Spleen (tissue), 13 donors: ENCODE measurements at regions of chr12 and their contacts with region 1.

Region 1: DNA sequence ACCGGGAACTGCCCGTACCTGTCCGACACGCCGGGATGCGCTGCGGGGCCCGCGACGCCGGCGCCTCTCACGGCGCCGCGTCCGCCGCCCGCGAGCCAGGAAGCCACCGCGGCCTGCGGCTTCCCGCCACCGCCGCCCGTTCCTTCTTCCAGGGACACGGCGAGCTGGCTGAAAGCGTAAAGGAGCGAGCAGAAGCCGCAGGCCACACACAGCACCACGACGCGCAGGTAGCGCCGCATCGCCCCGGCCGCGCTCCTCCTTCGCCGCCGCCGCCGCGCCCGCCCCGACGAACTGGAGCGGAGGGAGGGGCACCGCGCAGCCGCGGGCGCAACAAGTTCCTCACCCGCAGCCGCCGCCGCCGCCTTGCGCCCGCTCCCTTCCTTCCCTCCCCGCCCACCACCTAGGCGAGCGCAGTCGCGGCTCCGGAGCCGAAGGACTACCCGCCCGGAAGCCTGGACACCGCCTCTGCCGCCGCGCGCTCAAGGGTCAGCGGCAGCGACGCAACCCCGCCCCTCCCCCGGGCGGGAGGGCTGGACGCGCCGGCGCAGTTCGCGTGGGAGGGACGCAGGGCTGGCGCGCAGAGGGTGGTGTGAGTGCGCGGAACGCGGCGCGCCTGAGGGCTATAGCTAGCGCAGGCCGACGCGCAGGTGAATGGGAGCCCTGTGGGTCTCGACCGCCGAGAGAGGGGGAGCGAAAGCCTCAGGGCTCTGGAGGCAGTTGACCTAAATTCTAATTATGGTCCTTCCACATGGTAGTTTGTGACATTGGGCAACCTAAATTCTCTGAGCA is at the start of gene GXYLT1:
- DNase-seq: peak; percentile 98
- H3K4me3 ChIP-seq: peak within 1 kb of the TSS; percentile 69 to 90 (median 76)
- H3K27ac ChIP-seq: peak within 1 kb of the TSS; percentile 66 to 95 (median 91)
- H3K4me1 ChIP-seq: peaks cover 13 to 55% (median 35%) of the 10 kb centered on the region in 6 donors
- H3K27me3 ChIP-seq: no peaks in the 10 kb centered on the region
- CTCF ChIP-seq: peak in 3 of 11 experiments; percentile 7 to 28 (median 25)
- POLR2A ChIP-seq: peak in 2 of 3 donors; percentile 59 to 69
- total RNA-seq, gene GXYLT1: 10.5 to 21.7 (median 13.7) TPM

Region 2: GRCh38 chr12:42237052-42237852 is 92.7 kb after region 1 on chr12:
- intact Hi-C with region 1: loop called (anchors 10 kb)
- DNase-seq: peak; percentile 95
- H3K4me3 ChIP-seq: peak overlapping the region; percentile 53 to 84 (median 72)
- H3K27ac ChIP-seq: peak overlapping the region; percentile 63 to 98 (median 96)
- H3K4me1 ChIP-seq: peaks cover 19 to 61% (median 48%) of the 10 kb centered on the region in 6 donors
- H3K27me3 ChIP-seq: no peaks in the 10 kb centered on the region
- CTCF ChIP-seq: peak in 10 of 11 experiments; percentile 8 to 66 (median 52)
- POLR2A ChIP-seq: no peak